ENCODE measurements at regions of chr5 and their contacts with region 1.

Region 1: GRCh38 chr5:103375350-103375749 is 116.8 kb downstream of the MACIR start:
- DNase-seq: no peak
- ATAC-seq: no peak
- H3K4me3 ChIP-seq: no peak overlapping the region
- H3K4me3 Mint-ChIP-seq: no peak overlapping the region
- H3K27ac ChIP-seq: no peak overlapping the region
- H3K27ac Mint-ChIP-seq: no peak overlapping the region
- H3K4me1 ChIP-seq: no peaks in the 10 kb centered on the region
- H3K4me1 Mint-ChIP-seq: no peaks in the 10 kb centered on the region
- H3K27me3 ChIP-seq: no peaks in the 10 kb centered on the region
- H3K27me3 Mint-ChIP-seq: no peaks in the 10 kb centered on the region
- CTCF ChIP-seq: no peak

Region 2: DNA sequence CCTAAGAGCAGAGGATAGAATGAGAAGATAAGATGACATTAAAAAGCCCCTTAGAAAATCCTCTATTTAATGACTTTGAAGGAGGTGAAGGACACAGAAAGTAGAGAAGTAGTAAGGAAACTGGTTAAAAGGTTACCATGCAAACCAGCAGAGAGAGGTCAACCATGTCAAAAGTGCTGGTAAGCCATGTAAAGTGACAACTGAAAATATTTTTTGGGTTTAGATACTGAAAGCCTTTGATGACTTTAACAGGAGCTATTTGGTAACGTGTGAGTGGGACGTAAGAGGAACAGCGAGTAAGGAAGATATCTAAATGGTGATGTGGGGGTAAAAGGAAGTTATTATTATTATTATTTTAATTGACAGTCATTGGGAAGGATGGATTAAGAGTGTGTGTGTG is 59.9 kb before region 1 on chr5:
- CTCF ChIA-PET with region 1: no interaction called
- POLR2A ChIA-PET with region 1: no interaction called
- intact Hi-C with region 1: no loop called
- DNase-seq: no peak
- ATAC-seq: no peak
- H3K4me3 ChIP-seq: no peak overlapping the region
- H3K4me3 Mint-ChIP-seq: no peak overlapping the region
- H3K27ac ChIP-seq: no peak overlapping the region
- H3K27ac Mint-ChIP-seq: no peak overlapping the region
- H3K4me1 ChIP-seq: no peaks in the 10 kb centered on the region
- H3K4me1 Mint-ChIP-seq: no peaks in the 10 kb centered on the region
- H3K27me3 ChIP-seq: peaks cover 0 to 5% (median 2%) of the 10 kb centered on the region in 4 experiments
- H3K27me3 Mint-ChIP-seq: peaks cover 21% of the 10 kb centered on the region
- CTCF ChIP-seq: no peak

Region 3: GRCh38 chr5:103444333-103445038 is 69.1 kb after region 1 on chr5:
- CTCF ChIA-PET with region 1: no interaction called
- POLR2A ChIA-PET with region 1: no interaction called
- intact Hi-C with region 1: no loop called
- DNase-seq: no peak
- ATAC-seq: no peak
- H3K4me3 ChIP-seq: no peak overlapping the region
- H3K4me3 Mint-ChIP-seq: no peak overlapping the region
- H3K27ac ChIP-seq: no peak overlapping the region
- H3K27ac Mint-ChIP-seq: no peak overlapping the region
- H3K4me1 ChIP-seq: no peaks in the 10 kb centered on the region
- H3K4me1 Mint-ChIP-seq: no peaks in the 10 kb centered on the region
- H3K27me3 ChIP-seq: no peaks in the 10 kb centered on the region
- H3K27me3 Mint-ChIP-seq: no peaks in the 10 kb centered on the region
- CTCF ChIP-seq: no peak

Region 4: GRCh38 chr5:103808464-103809106 is 433.2 kb after region 1 on chr5:
- CTCF ChIA-PET with region 1: no interaction called
- POLR2A ChIA-PET with region 1: no interaction called
- intact Hi-C with region 1: loop called (anchors 5 kb)
- DNase-seq: no peak
- ATAC-seq: no peak
- H3K4me3 ChIP-seq: no peak overlapping the region
- H3K4me3 Mint-ChIP-seq: no peak overlapping the region
- H3K27ac ChIP-seq: no peak overlapping the region
- H3K27ac Mint-ChIP-seq: no peak overlapping the region
- H3K4me1 ChIP-seq: no peaks in the 10 kb centered on the region
- H3K4me1 Mint-ChIP-seq: no peaks in the 10 kb centered on the region
- H3K27me3 ChIP-seq: no peaks in the 10 kb centered on the region
- H3K27me3 Mint-ChIP-seq: no peaks in the 10 kb centered on the region
- CTCF ChIP-seq: no peak

Measured in B cell (primary cell).